MCF 10A (cell line): ENCODE measurements at regions of chr1 and their contacts with region 1.

Region 1: GRCh38 chr1:55848906-55849305 is 633.7 kb upstream of the USP24 start:
- DNase-seq: peak; percentile 53
- H3K4me3 Mint-ChIP-seq: no peak overlapping the region
- H3K27ac Mint-ChIP-seq: no peak overlapping the region
- H3K4me1 Mint-ChIP-seq: no peaks in the 10 kb centered on the region
- H3K27me3 Mint-ChIP-seq: no peaks in the 10 kb centered on the region
- CTCF ChIP-seq: peak; percentile 35

Region 2: DNA sequence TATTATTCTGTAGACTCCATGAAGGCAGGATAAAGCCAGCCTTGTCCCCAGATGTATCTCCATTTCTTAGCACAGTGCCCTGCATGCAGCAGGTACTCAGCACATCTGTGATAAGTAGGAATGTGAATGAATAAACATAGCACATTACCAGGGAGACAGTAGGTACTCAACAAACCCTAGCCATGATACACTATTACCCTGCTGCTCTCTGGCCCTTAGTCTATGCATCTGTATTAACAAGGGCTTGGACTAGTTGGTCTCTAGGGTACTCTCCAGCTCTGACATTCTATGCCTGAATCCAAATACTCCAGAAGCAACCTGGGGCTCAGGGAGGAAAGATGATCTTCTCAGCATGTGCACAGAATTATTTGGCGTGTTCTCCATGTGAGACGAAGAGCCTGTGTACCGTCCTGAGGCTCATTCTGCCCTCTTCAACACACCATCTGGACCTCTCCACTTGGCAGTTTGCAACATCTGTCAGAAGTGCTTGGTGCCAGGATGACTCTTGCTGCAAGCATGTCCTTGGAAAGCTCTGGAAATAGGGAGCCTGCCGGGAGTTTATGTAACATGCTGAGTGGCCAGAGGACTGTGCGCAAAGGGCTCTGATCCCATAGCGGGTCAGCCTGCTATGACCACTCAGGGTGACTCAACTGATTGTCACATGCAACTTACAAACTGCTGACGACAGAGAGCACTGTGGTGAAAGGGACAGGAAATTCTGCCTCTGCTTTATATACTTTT is 405.6 kb before region 1 on chr1:
- CTCF ChIA-PET with region 1: no interaction called
- POLR2A ChIA-PET with region 1: no interaction called
- intact Hi-C with region 1: loop called (anchors 1 kb)
- DNase-seq: peak; percentile 94
- H3K4me3 Mint-ChIP-seq: no peak overlapping the region
- H3K27ac Mint-ChIP-seq: peak overlapping the region; percentile 17
- H3K4me1 Mint-ChIP-seq: peaks cover 20% of the 10 kb centered on the region
- H3K27me3 Mint-ChIP-seq: no peaks in the 10 kb centered on the region
- CTCF ChIP-seq: no peak

Region 3: DNA sequence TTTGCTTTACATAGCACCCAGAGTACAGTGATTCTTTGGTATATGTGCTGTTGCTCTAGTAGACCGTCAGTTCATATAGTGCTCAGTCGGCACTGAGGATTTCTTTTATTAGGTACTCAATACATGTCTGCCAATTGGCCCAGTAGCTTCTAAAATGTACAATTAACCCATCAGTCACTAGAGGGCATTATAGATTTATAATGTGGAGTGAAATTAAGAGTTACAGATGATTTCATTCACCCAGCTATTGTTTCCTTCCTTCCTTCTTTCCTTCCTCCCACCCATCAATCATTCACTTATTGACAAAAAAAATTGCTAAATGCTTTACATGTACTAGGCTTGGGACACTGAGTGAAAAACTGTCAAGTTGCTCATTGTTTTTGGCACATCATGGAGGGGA is 370.2 kb before region 1 on chr1:
- CTCF ChIA-PET with region 1: interaction called, 6 read pairs
- POLR2A ChIA-PET with region 1: no interaction called
- intact Hi-C with region 1: loop called (anchors 2 kb)
- DNase-seq: peak; percentile 40
- H3K4me3 Mint-ChIP-seq: no peak overlapping the region
- H3K27ac Mint-ChIP-seq: no peak overlapping the region
- H3K4me1 Mint-ChIP-seq: peaks cover 12% of the 10 kb centered on the region
- H3K27me3 Mint-ChIP-seq: no peaks in the 10 kb centered on the region
- CTCF ChIP-seq: peak; percentile 34

Region 4: GRCh38 chr1:55506686-55507577 is 342.0 kb before region 1 on chr1:
- CTCF ChIA-PET with region 1: no interaction called
- POLR2A ChIA-PET with region 1: no interaction called
- intact Hi-C with region 1: loop called (anchors 1 kb)
- DNase-seq: peak; percentile 34
- H3K4me3 Mint-ChIP-seq: no peak overlapping the region
- H3K27ac Mint-ChIP-seq: peak overlapping the region; percentile 28
- H3K4me1 Mint-ChIP-seq: peaks cover 14% of the 10 kb centered on the region
- H3K27me3 Mint-ChIP-seq: no peaks in the 10 kb centered on the region
- CTCF ChIP-seq: no peak

Region 5: GRCh38 chr1:55938376-55938850 is 89.5 kb after region 1 on chr1:
- CTCF ChIA-PET with region 1: no interaction called
- POLR2A ChIA-PET with region 1: no interaction called
- intact Hi-C with region 1: no loop called
- DNase-seq: no peak
- H3K4me3 Mint-ChIP-seq: no peak overlapping the region
- H3K27ac Mint-ChIP-seq: no peak overlapping the region
- H3K4me1 Mint-ChIP-seq: no peaks in the 10 kb centered on the region
- H3K27me3 Mint-ChIP-seq: no peaks in the 10 kb centered on the region
- CTCF ChIP-seq: no peak